Heart right ventricle (tissue), 16 donors: ENCODE measurements at regions of chr22 and their contacts with region 1.

Region 1: GRCh38 chr22:42090596-42091454 is at the start of gene NDUFA6:
- DNase-seq: peak; percentile 98 to 99
- ATAC-seq: peak; percentile 97 to 99 (median 98)
- H3K4me3 ChIP-seq: peak within 1 kb of the TSS; percentile 68 to 100 (median 89)
- H3K27ac ChIP-seq: peak within 1 kb of the TSS; percentile 95 to 100 (median 98)
- H3K4me1 ChIP-seq: peaks cover 8 to 46% (median 40%) of the 10 kb centered on the region in 9 donors
- H3K27me3 ChIP-seq: no peaks in the 10 kb centered on the region
- CTCF ChIP-seq: peak; percentile 81 to 99 (median 95)
- total RNA-seq, gene NDUFA6: 179 to 344 (median 265) TPM

Region 2: DNA sequence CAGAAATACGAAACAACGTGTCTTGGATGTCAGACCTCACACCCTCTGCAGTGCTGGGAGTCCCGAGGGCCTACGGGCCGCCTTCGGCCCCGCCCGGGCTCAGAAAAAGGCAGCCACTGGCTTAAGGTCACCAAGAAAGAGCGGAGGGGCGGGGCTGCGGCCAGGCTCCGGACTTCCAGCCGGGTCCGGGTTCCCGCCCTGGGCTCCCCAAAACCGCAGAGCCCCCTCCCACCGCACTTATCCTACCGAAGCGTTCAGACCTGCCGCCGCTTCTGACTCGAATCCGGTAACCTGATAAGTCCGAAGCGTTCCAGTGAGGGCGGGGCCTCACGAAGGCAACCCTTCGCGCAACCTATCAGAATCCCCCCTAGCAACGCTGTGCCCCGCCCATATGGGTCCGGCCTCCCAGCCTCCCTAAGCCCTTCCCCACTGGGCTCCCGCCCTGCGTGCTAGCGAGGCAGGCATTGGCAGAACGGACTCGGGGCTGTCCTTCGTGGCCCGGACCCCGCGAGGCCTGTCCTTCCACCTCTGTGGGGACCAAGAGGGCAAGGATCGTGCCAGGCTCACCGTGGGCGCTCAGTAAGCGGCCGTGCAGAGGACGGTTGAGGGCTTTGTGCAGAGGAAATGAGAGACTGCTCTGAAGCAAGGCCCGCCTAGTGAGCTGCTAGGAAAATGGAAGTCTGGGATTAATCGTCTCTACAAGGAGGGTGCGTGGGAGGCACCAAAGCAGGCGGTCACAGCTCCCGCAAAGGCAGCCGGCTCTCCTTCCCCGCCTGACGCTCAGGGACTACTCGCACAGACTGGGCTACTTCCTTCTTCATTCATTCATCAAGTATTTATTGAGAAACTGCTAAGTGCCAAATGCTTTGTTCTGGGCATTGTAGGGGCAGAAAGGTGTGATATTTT is 20.1 kb before region 1 on chr22 and contains the start of gene NAGA:
- intact Hi-C with region 1: loop called in 1 of 10 experiments (anchors 1 kb)
- DNase-seq: peak; percentile 95 to 97
- ATAC-seq: peak; percentile 94 to 98 (median 97)
- H3K4me3 ChIP-seq: peak within 1 kb of the TSS; percentile 38 to 87 (median 62)
- H3K27ac ChIP-seq: peak within 1 kb of the TSS; percentile 57 to 96 (median 86)
- H3K4me1 ChIP-seq: peaks cover 9 to 60% (median 35%) of the 10 kb centered on the region in 9 donors
- H3K27me3 ChIP-seq: no peaks in the 10 kb centered on the region
- CTCF ChIP-seq: no peak
- total RNA-seq, gene NAGA: 7.3 to 34.8 (median 12.3) TPM

Region 3: GRCh38 chr22:42079319-42080251 is 11.2 kb before region 1 on chr22 and contains the start of gene SMDT1:
- intact Hi-C with region 1: loop called in 4 of 10 experiments (anchors 1 kb)
- DNase-seq: peak; percentile 99 to 100
- ATAC-seq: peak; percentile 93 to 96 (median 94)
- H3K4me3 ChIP-seq: peak within 1 kb of the TSS; percentile 50 to 79 (median 66)
- H3K27ac ChIP-seq: peak within 1 kb of the TSS; percentile 92 to 100 (median 98)
- H3K4me1 ChIP-seq: peaks cover 5 to 63% (median 35%) of the 10 kb centered on the region in 9 donors
- H3K27me3 ChIP-seq: no peaks in the 10 kb centered on the region
- CTCF ChIP-seq: peak in 1 of 9 donors; percentile 5
- total RNA-seq, gene SMDT1: 111 to 193 (median 128) TPM

Region 4: GRCh38 chr22:42151924-42152635 is 61.3 kb after region 1 on chr22:
- intact Hi-C with region 1: no loop called
- DNase-seq: no peak
- ATAC-seq: peak in 1 of 8 donors; percentile 28
- H3K4me3 ChIP-seq: peak overlapping the region in 1 of 10 donors; percentile 13
- H3K27ac ChIP-seq: no peak overlapping the region
- H3K4me1 ChIP-seq: peaks cover 0 to 7% (median 0%) of the 10 kb centered on the region in 9 donors
- H3K27me3 ChIP-seq: no peaks in the 10 kb centered on the region
- CTCF ChIP-seq: no peak

Region 5: DNA sequence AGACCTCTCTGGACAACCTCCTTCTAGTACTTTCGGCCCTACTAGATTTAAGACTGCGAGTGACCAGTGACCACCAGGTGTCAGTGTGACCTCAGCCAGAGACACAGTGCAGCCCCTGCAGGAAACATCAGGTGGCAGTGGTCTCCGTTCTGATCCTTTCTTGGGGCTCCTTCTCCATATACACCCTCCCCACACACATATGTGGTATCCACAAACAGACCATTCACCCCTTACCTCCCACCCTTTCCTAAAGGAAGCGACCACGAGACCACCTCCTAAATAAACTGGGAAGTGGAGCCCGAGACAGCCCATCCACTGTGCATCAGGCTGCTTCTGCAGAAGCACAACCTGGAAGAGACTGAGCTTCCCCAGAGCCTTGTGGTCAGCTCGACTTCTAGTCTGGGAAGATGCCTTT is 78.2 kb after region 1 on chr22:
- intact Hi-C with region 1: no loop called
- DNase-seq: peak; percentile 55 to 74
- ATAC-seq: peak; percentile 63 to 89 (median 82)
- H3K4me3 ChIP-seq: no peak overlapping the region
- H3K27ac ChIP-seq: no peak overlapping the region
- H3K4me1 ChIP-seq: peaks cover 0 to 9% (median 0%) of the 10 kb centered on the region in 9 donors
- H3K27me3 ChIP-seq: no peaks in the 10 kb centered on the region
- CTCF ChIP-seq: peak; percentile 73 to 96 (median 90)

Region 6: DNA sequence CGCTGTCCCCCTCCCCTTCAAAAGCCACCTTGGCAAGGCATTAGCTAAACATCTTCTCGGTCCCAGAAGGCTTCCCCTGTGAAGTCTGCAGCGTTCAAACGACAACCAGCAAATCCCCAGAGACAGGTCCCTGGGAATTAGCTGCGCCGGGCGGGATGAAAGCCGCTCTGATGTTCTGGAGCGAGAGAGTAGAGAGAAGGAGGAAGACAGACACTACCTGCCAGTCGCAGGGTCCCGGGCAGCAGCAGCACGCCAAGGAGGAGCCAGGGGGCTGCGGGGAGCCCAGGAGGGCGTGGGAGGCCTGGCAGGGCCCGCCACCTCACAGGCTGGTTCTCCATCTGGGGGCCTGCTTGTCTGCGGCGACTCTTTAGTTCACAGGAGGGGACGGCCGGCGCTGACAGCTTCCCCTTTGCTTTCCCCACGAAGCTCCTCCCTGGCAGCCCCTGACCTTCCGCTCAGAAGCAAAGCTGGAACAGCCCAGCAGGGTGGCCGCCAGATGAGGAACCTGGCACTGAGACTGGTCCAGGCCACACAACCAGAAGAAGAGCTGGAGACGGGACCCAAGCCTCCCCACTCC is 341.3 kb after region 1 on chr22 and contains the start of gene NFAM1:
- intact Hi-C with region 1: loop called in 8 of 10 experiments (anchors 2 to 10 kb)
- DNase-seq: peak in 1 of 2 donors; percentile 54
- ATAC-seq: peak in 7 of 8 donors; percentile 44 to 75 (median 62)
- H3K4me3 ChIP-seq: peak within 1 kb of the TSS in 7 of 10 donors; percentile 17 to 62 (median 33)
- H3K27ac ChIP-seq: peak within 1 kb of the TSS in 6 of 10 donors; percentile 31 to 95 (median 60)
- H3K4me1 ChIP-seq: peaks cover 0 to 58% (median 18%) of the 10 kb centered on the region in 9 donors
- H3K27me3 ChIP-seq: peaks cover 0 to 82% (median 54%) of the 10 kb centered on the region in 7 donors
- CTCF ChIP-seq: no peak
- total RNA-seq, gene NFAM1: 0.45 to 6.4 (median 1.6) TPM